AG04449 (cell line): ENCODE measurements at regions of chr10 and their contacts with region 1.

Region 1: DNA sequence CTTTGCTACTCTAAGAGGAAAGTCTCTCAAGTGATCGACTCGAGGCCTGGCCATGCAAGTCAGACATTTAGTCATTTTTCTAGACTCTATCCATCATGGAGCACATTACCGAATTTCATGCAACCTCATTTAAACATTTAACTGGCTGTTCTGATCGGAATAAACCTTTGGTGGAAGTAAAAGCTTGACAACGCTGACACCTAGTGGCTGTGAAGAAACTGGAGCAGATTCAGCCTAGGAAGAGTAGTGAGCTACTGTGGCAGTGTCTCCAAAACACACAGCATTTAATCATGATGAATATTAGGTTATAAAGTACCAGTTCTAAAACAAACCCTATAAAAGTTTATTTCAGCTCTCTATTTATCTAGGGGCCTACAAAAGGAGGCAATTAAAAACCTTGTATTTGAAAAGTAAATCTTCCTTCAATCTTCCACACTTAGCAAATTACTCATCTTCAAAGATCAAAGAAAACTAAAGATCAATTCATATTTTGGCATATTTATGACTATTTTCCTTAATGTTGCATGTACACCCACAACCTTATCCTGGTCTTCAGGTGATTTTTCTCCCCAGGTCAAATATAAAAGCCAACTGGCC is 175.0 kb downstream of the CTNNA3 start:
- DNase-seq: peak; percentile 5
- H3K4me3 ChIP-seq: no peak overlapping the region
- CTCF ChIP-seq: peak; percentile 74

Region 2: DNA sequence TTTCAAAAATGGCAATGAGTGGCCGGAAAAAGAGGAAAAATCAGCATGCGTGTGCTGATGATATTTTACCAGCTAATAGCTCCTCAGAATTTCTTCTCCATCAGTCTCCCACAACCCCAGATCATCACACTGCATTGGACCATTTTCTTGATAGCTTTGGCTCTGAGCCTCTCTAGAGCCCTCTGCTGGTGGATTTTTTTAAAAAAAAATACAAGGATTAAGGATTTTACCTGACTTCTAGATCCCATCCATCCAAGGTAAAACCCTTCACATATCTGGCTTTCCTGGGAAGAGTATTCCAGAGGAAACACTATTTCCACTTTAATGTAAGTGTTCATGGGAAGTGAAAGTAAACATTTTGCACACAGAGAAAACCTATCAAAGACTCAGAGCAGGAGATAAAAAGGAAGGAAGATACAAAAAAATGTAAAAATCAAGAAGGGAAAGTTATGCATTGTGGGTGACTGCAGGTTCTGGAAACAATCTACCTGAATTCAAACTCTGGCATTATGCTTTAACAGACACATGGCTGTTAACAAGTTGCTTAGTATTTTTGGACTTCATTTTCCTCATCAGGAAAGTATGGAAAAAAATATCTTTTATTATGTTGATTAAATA is 214.3 kb before region 1 on chr10:
- CTCF ChIA-PET with region 1: interaction called, 10 read pairs
- POLR2A ChIA-PET with region 1: interaction called, 4 read pairs
- DNase-seq: no peak
- H3K4me3 ChIP-seq: no peak overlapping the region
- CTCF ChIP-seq: peak; percentile 17